Right ventricle myocardium inferior (tissue), 1 donor: ENCODE measurements at regions of chr11 and their contacts with region 1.

Region 1: DNA sequence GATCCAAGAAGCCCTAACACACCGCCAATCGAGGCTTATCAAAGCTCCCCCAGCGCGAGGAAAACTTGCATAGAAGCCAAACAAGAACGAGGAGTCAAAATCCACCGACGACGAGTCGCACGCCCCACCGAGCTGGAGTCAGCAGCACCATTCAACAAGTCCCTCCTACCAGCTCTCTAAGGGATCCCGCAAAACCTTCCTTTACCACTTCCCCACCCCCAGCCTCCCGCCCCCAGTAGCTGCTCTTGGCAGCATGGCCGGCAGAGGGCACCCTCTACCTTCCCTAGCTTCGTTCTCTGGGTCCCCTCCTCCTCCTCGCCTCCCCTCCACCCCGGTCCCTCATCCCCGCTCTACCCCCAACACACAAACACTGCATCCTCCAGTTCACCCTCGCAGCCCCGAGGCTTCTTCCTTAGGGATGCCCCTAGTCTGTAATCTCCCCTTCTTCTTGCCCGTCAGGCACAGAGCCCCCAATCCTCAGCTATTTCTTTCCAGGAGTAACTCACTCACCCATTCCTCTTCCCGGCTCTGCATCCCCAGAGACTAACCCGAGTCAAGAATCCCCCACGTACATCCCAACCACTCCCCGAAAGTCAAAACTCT is 1.3 kb downstream of the BDNF start:
- DNase-seq: peak; percentile 84
- ATAC-seq: peak; percentile 88

Region 2: DNA sequence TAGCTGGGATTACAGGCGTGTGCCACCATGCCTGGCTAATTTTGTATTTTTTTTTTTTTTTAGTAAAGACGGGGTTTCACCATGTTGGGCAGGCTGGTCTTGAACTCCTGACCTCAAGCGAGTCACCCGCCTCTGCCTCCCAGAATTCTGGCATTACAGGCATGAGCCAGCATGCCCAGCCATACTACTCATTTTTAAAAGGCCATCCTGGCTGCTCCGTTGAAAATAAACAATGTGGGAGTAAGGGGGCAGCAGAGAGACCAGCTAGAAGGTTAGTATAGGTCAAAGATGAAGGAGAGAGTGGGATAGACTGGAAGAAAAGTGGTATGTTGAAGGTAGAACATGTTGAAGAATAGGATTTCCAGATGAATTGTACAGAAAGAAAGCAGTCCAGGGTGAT is 174.8 kb before region 1 on chr11:
- intact Hi-C with region 1: loop called (anchors 5 kb)
- DNase-seq: no peak
- ATAC-seq: no peak

Region 3: DNA sequence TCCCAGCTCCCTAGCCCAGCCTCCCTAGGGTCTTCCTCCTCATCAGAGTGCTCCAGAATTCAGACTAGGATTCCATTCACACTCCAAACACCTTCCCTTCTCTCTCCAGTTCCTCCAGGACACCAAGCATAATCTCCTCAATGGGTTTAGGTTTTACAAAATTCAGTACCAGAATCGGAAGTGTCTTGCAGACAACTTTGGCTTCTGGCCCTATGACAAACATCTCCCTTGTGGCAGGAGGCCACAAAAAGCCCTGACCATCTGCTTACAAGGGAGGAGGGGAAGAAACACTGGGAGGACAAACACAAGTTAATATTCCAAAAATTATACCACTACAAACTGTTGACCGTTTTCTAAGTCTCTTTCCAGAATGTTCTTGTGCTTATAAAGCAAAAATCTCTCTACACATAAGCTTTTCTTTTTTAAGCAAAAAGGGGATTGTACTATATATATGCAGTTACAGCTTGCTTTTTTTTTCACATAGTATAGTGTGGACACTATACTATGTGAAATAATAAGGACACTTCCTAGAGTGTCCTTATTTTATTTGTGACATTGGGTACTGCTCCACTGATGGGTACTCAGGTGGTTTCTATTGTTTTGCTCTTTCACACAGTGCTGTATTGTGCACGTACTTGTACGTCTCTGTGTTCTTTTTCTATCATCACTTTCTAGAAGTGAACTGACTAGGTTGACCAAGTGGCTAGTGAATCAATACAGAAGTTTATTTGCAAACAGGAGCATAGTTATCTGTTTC is 77.4 kb before region 1 on chr11:
- intact Hi-C with region 1: no loop called
- DNase-seq: no peak
- ATAC-seq: no peak

Region 4: DNA sequence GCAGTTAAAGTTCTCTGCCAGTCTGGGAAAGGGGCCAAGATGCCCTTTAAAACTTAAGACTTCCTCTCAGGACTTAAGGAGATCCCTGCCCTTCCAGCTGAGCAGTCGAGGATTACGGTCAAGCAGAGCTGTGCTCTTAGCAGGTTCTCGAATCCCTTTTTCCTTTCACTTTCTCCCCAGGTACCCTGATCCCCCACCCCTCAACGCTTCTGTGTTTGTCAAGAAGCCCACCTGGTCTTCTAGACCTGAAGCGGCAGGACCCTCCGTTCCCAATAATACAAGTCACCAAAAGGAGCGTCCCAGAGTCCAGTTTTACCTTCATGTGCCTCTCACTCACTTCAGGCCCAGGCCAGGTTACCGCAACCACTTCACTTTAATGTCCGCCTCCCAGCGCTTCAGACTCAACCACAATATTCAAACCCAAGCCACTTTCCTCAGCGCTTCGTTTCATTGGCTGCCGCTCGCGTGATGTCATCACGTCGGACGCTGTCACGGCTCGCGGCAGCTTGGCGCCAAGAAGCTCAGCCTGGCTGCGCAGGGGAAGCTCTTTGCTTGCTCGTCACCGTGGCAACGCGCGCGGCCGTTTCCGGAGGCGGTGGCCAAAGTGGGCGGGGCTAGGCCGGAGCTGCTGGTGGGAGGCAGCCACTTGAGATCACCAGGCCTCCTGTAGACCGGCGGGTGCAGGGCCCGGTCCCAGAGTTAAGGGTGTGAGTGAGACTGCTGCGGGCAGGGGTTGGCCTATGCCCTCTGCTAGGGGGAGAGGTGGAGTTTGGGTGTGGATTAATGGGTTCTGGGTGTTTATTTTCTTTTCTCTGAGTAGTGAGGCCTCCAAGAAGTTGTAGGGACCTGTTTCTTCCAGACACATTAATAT is 409.0 kb after region 1 on chr11 and contains the starts of genes KIF18A and METTL15:
- intact Hi-C with region 1: loop called (anchors 2 kb)
- DNase-seq: peak; percentile 100
- ATAC-seq: peak; percentile 99
- total RNA-seq, gene KIF18A: 0.08 TPM
- total RNA-seq, gene METTL15: 9.4 TPM

Region 5: GRCh38 chr11:28697920-28698827 is 999.2 kb after region 1 on chr11:
- intact Hi-C with region 1: loop called (anchors 5 kb)
- DNase-seq: peak; percentile 68
- ATAC-seq: no peak